ENCODE measurements at regions of chr19 and their contacts with region 1.

Region 1: GRCh38 chr19:18214779-18215433 is 11.1 kb upstream of the RAB3A start:
- DNase-seq: no peak
- H3K4me3 ChIP-seq: no peak overlapping the region
- H3K27ac ChIP-seq: no peak overlapping the region
- H3K4me1 ChIP-seq: no peaks in the 10 kb centered on the region
- H3K27me3 ChIP-seq: no peaks in the 10 kb centered on the region
- CTCF ChIP-seq: no peak
- POLR2A ChIP-seq: no peak

Region 2: GRCh38 chr19:18097217-18097992 is 117.5 kb before region 1 on chr19 and contains the start of gene MAST3:
- intact Hi-C with region 1: no loop called
- DNase-seq: peak; percentile 82 to 94 (median 89)
- H3K4me3 ChIP-seq: peak within 1 kb of the TSS in 2 of 4 donors; percentile 43 to 69
- H3K27ac ChIP-seq: no peak within 1 kb of the TSS
- H3K4me1 ChIP-seq: peaks cover 7 to 16% of the 10 kb centered on the region in 2 donors
- H3K27me3 ChIP-seq: no peaks in the 10 kb centered on the region
- CTCF ChIP-seq: no peak
- POLR2A ChIP-seq: no peak
- total RNA-seq, gene MAST3: 1.6 to 18.6 (median 11.7) TPM

Region 3: GRCh38 chr19:18251587-18252369 is 36.9 kb after region 1 on chr19:
- intact Hi-C with region 1: loop called (anchors 5 kb)
- DNase-seq: peak; percentile 55 to 89 (median 74)
- H3K4me3 ChIP-seq: no peak overlapping the region
- H3K27ac ChIP-seq: no peak overlapping the region
- H3K4me1 ChIP-seq: no peaks in the 10 kb centered on the region
- H3K27me3 ChIP-seq: no peaks in the 10 kb centered on the region
- CTCF ChIP-seq: peak; percentile 93 to 98 (median 95)
- POLR2A ChIP-seq: no peak

Measured in adrenal gland (tissue), 19 donors.